ENCODE measurements at regions of chrX and their contacts with region 1.

Region 1: GRCh38 chrX:66728818-66729271 is 90.0 kb upstream of the EDA2R start:
- DNase-seq: peak; percentile 49
- ATAC-seq: peak; percentile 93
- H3K4me3 Mint-ChIP-seq: peak overlapping the region; percentile 90
- H3K27ac Mint-ChIP-seq: peak overlapping the region; percentile 97
- H3K4me1 Mint-ChIP-seq: no peaks in the 10 kb centered on the region
- H3K27me3 Mint-ChIP-seq: no peaks in the 10 kb centered on the region; the same call in 1 of the 2 replicates
- CTCF ChIP-seq: peak; percentile 69; the same call in 1 of the 2 replicates

Region 2: DNA sequence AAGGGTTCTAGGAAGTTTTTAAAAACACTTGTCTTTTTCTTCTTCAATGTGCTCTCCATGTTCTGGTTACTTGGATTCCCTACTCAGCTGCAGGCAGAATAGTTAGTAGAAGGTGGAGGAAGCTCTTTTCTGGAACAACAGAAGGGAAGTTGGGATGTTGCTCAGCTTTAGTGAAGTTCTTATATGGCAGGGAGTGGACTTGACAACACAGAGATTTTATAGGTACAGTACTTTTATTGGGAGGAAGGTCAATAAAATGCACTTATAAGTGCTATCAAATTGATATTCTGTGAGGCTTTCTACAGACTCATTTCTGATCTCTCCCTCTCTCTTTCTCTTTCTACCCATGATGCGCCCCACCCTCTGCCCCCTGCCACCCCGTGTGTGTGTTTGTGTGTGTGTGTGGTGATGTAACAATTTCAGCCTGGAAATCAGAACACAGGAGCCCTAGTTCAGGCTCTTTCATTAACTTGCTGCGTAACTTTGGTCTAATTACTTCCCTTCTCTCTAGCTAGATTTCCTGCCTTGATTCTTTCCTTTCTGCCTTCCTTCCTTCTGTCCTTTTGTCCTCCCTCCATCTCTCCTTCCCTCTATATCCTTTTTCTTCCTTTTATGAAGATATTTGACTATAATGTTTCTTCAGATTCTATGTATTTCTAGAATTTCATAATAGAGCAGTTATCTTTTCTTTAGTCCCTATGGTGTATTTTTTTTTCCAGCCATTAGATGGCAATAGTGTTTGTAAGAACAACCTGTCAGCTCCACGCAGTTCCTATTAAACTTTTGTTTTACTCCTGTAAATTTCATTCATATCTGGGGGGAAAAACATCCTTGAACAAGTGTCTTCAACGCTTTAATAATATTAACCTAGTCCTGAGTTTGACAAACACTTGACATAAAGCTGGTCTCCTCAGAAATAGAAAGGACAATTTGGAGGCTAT is 527.7 kb before region 1 on chrX:
- CTCF ChIA-PET with region 1: interaction called, 16 read pairs
- POLR2A ChIA-PET with region 1: no interaction called
- DNase-seq: no peak
- ATAC-seq: no peak
- H3K4me3 Mint-ChIP-seq: no peak overlapping the region
- H3K27ac Mint-ChIP-seq: no peak overlapping the region; the same call in 1 of the 2 replicates
- H3K4me1 Mint-ChIP-seq: no peaks in the 10 kb centered on the region
- H3K27me3 Mint-ChIP-seq: no peaks in the 10 kb centered on the region
- CTCF ChIP-seq: no peak